CD14-positive monocyte (primary cell): ENCODE measurements at regions of chr18 and their contacts with region 1.

Region 1: DNA sequence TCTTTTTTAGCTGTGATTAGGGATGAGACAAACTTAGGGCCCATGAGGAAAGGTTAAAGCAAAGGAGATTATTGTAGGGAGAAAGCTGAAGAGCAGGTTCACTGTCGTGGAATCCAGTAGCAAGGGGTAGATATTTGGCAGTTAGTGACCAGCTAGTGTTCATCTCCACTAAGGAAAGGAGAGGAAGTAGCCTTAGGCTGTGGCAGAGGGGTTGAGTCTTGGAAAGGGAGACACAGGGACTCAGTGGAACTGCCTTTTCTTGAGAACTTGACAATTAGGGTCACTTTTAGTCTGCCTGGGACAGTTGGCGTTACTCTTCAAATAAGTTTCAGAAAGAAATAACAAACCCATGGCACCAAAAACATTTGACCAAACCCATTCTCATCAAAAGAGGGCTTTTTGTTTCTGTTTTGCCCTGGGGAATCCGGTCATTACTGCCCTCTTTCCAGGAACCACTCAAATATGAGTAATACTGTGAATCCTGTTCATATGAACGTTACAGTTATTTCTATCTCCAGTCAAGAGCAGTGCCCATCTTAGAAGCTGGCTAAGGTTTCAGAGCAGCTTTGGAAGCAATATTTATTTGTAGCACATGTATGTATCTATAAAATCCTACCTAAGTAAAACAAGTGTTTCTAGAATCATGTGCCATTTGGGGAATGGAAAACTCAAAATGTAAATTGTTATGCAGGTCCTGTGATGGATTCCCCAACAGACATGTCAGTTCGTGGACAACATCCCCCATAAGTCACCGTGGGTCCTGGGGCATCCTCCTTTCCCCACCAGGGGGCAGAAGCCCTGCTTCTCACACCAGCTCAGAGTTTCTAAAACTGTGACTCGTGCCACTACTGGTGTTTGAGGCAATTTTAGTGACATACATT is 77.3 kb upstream of the PHLPP1 start:
- DNase-seq: peak; percentile 13 to 34 (median 32)
- H3K4me3 ChIP-seq: no peak overlapping the region
- H3K4me3 Mint-ChIP-seq: no peak overlapping the region
- H3K27ac ChIP-seq: no peak overlapping the region
- H3K27ac Mint-ChIP-seq: no peak overlapping the region
- H3K4me1 ChIP-seq: no peaks in the 10 kb centered on the region
- H3K4me1 Mint-ChIP-seq: no peaks in the 10 kb centered on the region
- H3K27me3 ChIP-seq: no peaks in the 10 kb centered on the region
- H3K27me3 Mint-ChIP-seq: peaks cover 0 to 5% (median 2%) of the 10 kb centered on the region in 3 donors
- CTCF ChIP-seq: peak; percentile 85

Region 2: DNA sequence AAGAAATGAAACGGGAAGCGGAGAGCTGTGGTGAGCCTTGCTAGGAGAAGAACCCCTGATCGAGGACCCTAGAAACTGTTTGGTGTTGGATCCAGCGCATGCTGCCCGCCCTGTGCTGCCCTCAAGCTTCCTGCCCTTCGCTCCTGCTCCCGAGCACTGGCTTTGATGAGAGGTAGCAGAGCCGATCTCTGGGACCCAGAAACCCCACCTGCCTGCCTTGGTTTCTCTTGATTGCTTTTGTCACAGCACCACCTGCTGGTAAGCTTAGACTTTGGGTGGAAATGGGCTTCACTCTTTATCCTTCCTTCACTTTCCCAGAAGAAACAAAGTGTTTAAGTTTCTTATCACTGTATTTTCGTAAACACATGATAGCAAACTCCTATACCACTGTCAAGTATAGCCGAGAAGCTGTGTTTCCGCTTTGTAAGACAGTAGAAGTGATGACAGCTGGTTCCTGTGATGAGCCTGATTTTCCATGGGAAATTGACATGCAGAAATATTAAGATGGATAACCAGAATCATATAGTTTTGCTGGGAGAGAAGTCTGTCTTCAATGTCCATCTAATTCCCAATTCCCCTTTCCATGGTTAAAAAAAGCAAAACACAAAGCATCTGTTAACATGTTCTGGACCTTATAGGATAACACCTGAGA is 344.7 kb after region 1 on chr18:
- intact Hi-C with region 1: loop called in 1 of 2 experiments (anchors 10 kb)
- DNase-seq: peak; percentile 15 to 47 (median 46)
- H3K4me3 ChIP-seq: peak overlapping the region; percentile 45 to 90 (median 78)
- H3K4me3 Mint-ChIP-seq: peak overlapping the region; percentile 86 to 97
- H3K27ac ChIP-seq: peak overlapping the region in 1 of 2 donors; percentile 51
- H3K27ac Mint-ChIP-seq: peak overlapping the region in 5 of 7 donors; percentile 37 to 82 (median 81)
- H3K4me1 ChIP-seq: peaks cover 34 to 40% of the 10 kb centered on the region in 2 donors
- H3K4me1 Mint-ChIP-seq: peaks cover 46% of the 10 kb centered on the region
- H3K27me3 ChIP-seq: no peaks in the 10 kb centered on the region
- H3K27me3 Mint-ChIP-seq: no peaks in the 10 kb centered on the region
- CTCF ChIP-seq: peak; percentile 77